GM12878 (cell line): ENCODE measurements at regions of chrX and their contacts with region 1.

Region 1: GRCh38 chrX:52563105-52563504 is 46.2 kb upstream of the XAGE1B start:
- DNase-seq: no peak
- ATAC-seq: no peak
- H3K4me3 ChIP-seq: no peak overlapping the region
- H3K27ac ChIP-seq: no peak overlapping the region
- H3K4me1 ChIP-seq: no peaks in the 10 kb centered on the region
- H3K27me3 ChIP-seq: no peaks in the 10 kb centered on the region
- CTCF ChIP-seq: no peak
- EP300 ChIP-seq: no peak
- POLR2A ChIP-seq: no peak
- RAD21 ChIP-seq: no peak

Region 2: GRCh38 chrX:51825436-51825835 is 737.7 kb before region 1 on chrX:
- CTCF ChIA-PET with region 1: no interaction called
- POLR2A ChIA-PET with region 1: no interaction called
- RAD21 ChIA-PET with region 1: no interaction called
- SMC1A ChIA-PET with region 1: no interaction called
- in situ Hi-C with region 1: no loop called
- intact Hi-C with region 1: no loop called
- DNase-seq: no peak
- ATAC-seq: no peak
- H3K4me3 ChIP-seq: no peak overlapping the region
- H3K27ac ChIP-seq: no peak overlapping the region
- H3K4me1 ChIP-seq: no peaks in the 10 kb centered on the region
- H3K27me3 ChIP-seq: no peaks in the 10 kb centered on the region
- CTCF ChIP-seq: no peak
- EP300 ChIP-seq: no peak
- POLR2A ChIP-seq: no peak
- RAD21 ChIP-seq: no peak

Region 3: DNA sequence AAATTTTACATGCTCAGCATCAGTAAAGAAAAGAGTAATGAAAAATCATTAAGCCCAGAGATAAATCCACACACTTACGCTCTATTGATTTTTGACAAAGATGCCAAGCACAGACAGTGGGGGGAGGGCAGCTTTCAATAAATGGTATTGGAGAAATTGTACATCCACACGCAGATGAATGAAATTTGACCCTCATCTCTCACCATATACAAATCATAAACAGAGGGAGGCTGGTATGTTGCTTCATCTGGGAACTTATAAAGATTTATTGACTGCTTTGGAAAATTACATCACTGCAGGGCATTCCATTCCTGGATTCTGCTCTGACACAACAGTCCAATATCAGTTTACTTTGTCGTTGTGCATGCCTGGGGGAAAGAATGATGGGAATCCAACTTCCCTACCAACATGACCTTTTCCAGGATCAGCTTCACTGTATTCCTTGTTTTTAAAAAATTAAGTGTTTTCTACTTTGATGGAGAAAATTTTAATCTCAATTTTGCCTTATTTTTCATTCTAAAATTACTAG is 125.8 kb before region 1 on chrX:
- CTCF ChIA-PET with region 1: no interaction called
- POLR2A ChIA-PET with region 1: no interaction called
- RAD21 ChIA-PET with region 1: no interaction called
- SMC1A ChIA-PET with region 1: no interaction called
- in situ Hi-C with region 1: loop called (anchors 10 kb)
- intact Hi-C with region 1: no loop called
- DNase-seq: no peak
- ATAC-seq: no peak
- H3K4me3 ChIP-seq: no peak overlapping the region
- H3K27ac ChIP-seq: no peak overlapping the region
- H3K4me1 ChIP-seq: no peaks in the 10 kb centered on the region
- H3K27me3 ChIP-seq: no peaks in the 10 kb centered on the region
- CTCF ChIP-seq: no peak
- EP300 ChIP-seq: no peak
- POLR2A ChIP-seq: no peak
- RAD21 ChIP-seq: no peak

Region 4: GRCh38 chrX:52544147-52544832 is 18.8 kb before region 1 on chrX:
- CTCF ChIA-PET with region 1: no interaction called
- POLR2A ChIA-PET with region 1: no interaction called
- RAD21 ChIA-PET with region 1: no interaction called
- SMC1A ChIA-PET with region 1: no interaction called
- in situ Hi-C with region 1: no loop called
- intact Hi-C with region 1: no loop called
- DNase-seq: no peak
- ATAC-seq: no peak
- H3K4me3 ChIP-seq: no peak overlapping the region
- H3K27ac ChIP-seq: no peak overlapping the region
- H3K4me1 ChIP-seq: no peaks in the 10 kb centered on the region
- H3K27me3 ChIP-seq: no peaks in the 10 kb centered on the region
- CTCF ChIP-seq: no peak
- EP300 ChIP-seq: no peak
- POLR2A ChIP-seq: no peak
- RAD21 ChIP-seq: no peak